ENCODE measurements at regions of chr12 and their contacts with region 1.

Region 1: GRCh38 chr12:56041552-56042429 is at the start of gene RPS26:
- DNase-seq: peak; percentile 91 to 100
- ATAC-seq: peak; percentile 96 to 97
- H3K4me3 ChIP-seq: peak within 1 kb of the TSS; percentile 74
- H3K27ac ChIP-seq: peak within 1 kb of the TSS; percentile 90 to 99
- H3K4me1 ChIP-seq: peaks cover 16% of the 10 kb centered on the region
- CTCF ChIP-seq: peak; percentile 71
- EP300 ChIP-seq: no peak
- POLR2A ChIP-seq: peak; percentile 99
- RAD21 ChIP-seq: peak; percentile 70 to 83
- polyA plus RNA-seq, gene RPS26: 513 and 524 TPM in 2 replicates

Region 2: DNA sequence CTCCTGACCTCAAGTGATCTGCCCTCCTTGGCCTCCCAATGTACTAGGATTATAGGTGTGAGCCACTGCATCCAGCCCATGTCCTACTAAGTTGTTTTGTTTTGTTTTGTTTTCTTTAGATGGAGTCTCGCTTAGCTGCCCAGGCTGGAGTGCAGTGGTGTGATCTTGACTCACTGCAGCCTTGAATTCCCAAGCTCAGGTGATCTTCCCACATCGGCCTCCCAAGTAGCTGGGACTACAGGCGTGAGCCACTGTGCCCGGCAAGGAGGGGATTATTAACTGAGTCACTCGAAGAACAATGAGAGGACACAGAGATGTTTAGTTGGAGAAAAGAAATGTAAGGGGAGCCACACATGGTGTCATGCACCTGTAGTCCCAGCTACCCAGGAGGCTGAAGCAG is 20.2 kb after region 1 on chr12:
- CTCF ChIA-PET with region 1: interaction called, 13 read pairs
- POLR2A ChIA-PET with region 1: no interaction called
- DNase-seq: no peak
- ATAC-seq: no peak
- H3K4me3 ChIP-seq: no peak overlapping the region
- H3K27ac ChIP-seq: no peak overlapping the region
- H3K4me1 ChIP-seq: peaks cover 4% of the 10 kb centered on the region; the same call in 1 of the 3 replicates
- CTCF ChIP-seq: no peak
- EP300 ChIP-seq: no peak
- POLR2A ChIP-seq: no peak
- RAD21 ChIP-seq: no peak

Region 3: DNA sequence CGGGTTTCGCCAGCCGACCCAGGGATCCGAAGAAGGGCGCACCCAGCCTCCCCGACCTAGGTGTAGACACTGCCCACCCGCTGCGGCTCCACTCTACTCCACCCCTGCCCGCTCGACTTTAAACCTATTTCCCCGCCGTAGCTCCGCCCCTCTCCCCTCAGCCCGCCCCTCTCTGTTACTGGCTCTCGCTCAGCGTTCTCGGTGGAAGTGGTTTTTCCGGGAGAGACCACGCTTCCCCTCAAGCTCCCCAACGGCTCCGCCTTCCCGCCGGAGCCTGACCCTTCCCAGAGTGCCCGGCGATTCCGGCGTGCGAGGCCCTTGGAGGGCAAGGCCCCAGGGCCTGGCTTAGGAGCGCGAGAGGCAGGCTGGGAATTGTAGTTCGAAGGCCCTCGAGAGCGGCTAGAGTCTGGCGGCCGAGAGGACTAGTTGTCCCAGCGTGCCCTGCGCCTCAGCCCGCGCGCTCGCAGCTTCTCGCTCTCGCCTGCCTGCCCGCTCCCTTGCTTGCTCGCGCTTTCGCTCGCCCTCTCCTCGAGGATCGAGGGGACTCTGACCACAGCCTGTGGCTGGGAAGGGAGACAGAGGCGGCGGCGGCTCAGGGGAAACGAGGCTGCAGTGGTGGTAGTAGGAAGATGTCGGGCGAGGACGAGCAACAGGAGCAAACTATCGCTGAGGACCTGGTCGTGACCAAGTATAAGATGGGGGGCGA is 62.5 kb after region 1 on chr12 and contains the start of gene PA2G4:
- CTCF ChIA-PET with region 1: interaction called, 23 read pairs
- POLR2A ChIA-PET with region 1: interaction called, 14 read pairs
- DNase-seq: peak; percentile 99
- ATAC-seq: peak; percentile 98 to 99
- H3K4me3 ChIP-seq: peak within 1 kb of the TSS; percentile 85
- H3K27ac ChIP-seq: peak within 1 kb of the TSS; percentile 94
- H3K4me1 ChIP-seq: peaks cover 24% of the 10 kb centered on the region
- CTCF ChIP-seq: no peak
- EP300 ChIP-seq: no peak; a peak in 1 of 5 replicates
- POLR2A ChIP-seq: peak; percentile 99
- RAD21 ChIP-seq: no peak
- polyA plus RNA-seq, gene PA2G4: 452 and 717 TPM in 2 replicates

Region 4: DNA sequence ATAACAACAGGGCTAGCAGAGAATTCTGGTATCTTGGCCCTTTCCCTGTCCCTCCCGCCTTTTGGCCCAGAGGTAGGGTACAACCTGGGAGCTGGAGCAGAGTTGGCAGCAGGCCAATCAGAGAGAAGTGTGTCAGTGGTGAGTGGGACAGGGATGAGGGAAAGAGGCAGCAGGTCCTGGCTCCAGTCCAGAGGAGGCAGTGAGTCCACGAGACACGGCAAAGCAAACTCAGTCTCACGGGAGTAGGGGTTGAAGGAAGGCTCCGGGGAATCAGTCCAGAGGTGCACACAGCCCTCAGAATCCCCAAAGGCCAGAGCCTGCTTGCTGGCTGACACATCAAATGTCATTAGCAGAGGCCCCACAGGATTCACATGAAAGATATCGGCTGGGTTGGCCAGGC is 284.7 kb after region 1 on chr12:
- CTCF ChIA-PET with region 1: no interaction called
- POLR2A ChIA-PET with region 1: no interaction called
- DNase-seq: no peak
- ATAC-seq: no peak
- H3K4me3 ChIP-seq: no peak overlapping the region
- H3K27ac ChIP-seq: no peak overlapping the region
- H3K4me1 ChIP-seq: no peaks in the 10 kb centered on the region
- CTCF ChIP-seq: no peak
- EP300 ChIP-seq: no peak
- POLR2A ChIP-seq: no peak
- RAD21 ChIP-seq: no peak